Esophagus muscularis mucosa (tissue), 4 donors: ENCODE measurements at regions of chr4 and their contacts with region 1.

Region 1: DNA sequence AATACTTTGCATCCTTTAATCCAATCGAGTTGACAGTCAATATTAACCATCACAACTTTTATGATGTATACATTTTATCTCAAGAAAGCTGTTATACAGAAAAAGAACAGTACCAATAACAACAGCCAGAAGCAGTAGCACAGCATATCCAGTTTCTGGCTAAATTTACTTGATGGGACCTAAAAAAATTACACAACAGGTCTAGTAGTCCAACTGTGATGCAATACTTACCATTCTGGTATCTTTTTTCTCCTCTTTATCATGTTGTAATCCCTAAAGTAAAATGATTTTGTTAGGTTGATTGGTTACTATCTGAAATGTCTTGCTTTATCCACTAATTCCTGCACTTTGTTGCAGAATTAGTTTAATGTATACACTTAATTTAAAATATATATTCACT is 1150.6 kb downstream of the FAT4 start:
- DNase-seq: no peak
- H3K4me3 ChIP-seq: no peak overlapping the region
- H3K27ac ChIP-seq: no peak overlapping the region
- H3K4me1 ChIP-seq: no peaks in the 10 kb centered on the region
- H3K27me3 ChIP-seq: no peaks in the 10 kb centered on the region
- CTCF ChIP-seq: no peak
- EP300 ChIP-seq: no peak
- POLR2A ChIP-seq: no peak

Region 2: GRCh38 chr4:126558596-126558995 is 93.3 kb after region 1 on chr4:
- intact Hi-C with region 1: loop called (anchors 10 kb)
- DNase-seq: no peak
- H3K4me3 ChIP-seq: no peak overlapping the region
- H3K27ac ChIP-seq: no peak overlapping the region
- H3K4me1 ChIP-seq: no peaks in the 10 kb centered on the region
- H3K27me3 ChIP-seq: no peaks in the 10 kb centered on the region
- CTCF ChIP-seq: no peak
- EP300 ChIP-seq: no peak
- POLR2A ChIP-seq: no peak